GM18951 (cell line): ENCODE measurements at regions of chr6 and their contacts with region 1.

Region 1: DNA sequence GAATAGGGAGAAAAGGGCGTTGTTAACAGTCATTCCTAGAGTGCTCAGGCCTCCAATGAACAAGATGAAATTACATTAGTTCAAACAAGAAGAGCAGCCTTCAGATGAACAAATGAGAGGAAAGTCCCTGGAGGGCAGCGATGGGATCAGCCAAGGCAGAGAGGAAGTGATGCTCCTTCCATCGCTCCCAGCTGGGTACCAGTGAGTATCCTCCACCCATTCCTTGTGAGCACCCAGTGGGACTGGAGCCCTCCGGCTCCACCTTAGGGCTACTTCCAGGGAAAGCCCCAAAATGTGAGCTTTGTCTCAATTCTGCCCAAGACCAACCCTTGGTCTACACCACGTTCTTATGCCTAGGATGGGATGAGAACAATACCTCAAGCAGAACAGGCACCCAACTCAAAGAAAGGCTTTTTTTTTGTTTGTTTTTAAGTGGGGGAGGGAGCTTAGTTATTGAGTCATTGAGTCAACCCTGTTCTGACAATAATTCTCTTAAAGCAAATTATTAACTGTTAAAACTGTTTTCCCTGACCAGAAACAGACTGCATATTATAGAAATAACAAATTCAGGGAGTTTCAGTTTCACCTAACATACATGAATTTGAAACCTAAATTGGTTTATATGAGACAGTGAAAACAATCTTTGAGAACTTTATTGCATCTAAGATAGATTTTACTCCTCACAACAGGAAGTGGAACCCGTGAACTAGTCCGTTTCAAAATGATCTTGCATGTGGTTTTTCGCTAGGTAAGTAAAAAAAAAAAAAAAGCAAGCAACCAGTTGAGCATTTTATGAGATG is 106.9 kb downstream of the IPCEF1 start:
- POLR2A ChIP-seq: peak; percentile 40

Region 2: GRCh38 chr6:152982768-152983636 is 1266.7 kb before region 1 on chr6 and contains the start of gene FBXO5:
- in situ Hi-C with region 1: loop called (anchors 25 kb)
- POLR2A ChIP-seq: peak; percentile 86